ENCODE measurements at regions of chr5 and their contacts with region 1.

Region 1: GRCh38 chr5:134411546-134412266 is at the start of gene CDKN2AIPNL:
- DNase-seq: peak; percentile 94
- ATAC-seq: peak; percentile 99
- H3K4me3 Mint-ChIP-seq: peak within 1 kb of the TSS; percentile 97
- H3K27ac Mint-ChIP-seq: peak within 1 kb of the TSS; percentile 76
- H3K4me1 Mint-ChIP-seq: peaks cover 35% of the 10 kb centered on the region
- H3K27me3 Mint-ChIP-seq: no peaks in the 10 kb centered on the region
- CTCF ChIP-seq: peak; percentile 71
- total RNA-seq, gene CDKN2AIPNL: 38.2 to 41.1 TPM

Region 2: GRCh38 chr5:134370871-134371833 is 40.6 kb before region 1 on chr5 and contains the start of gene UBE2B:
- CTCF ChIA-PET with region 1: interaction called, 10 read pairs
- POLR2A ChIA-PET with region 1: interaction called, 7 read pairs
- intact Hi-C with region 1: no loop called
- DNase-seq: peak; percentile 100
- ATAC-seq: peak; percentile 77
- H3K4me3 Mint-ChIP-seq: peak within 1 kb of the TSS; percentile 95
- H3K27ac Mint-ChIP-seq: peak within 1 kb of the TSS; percentile 99
- H3K4me1 Mint-ChIP-seq: peaks cover 41% of the 10 kb centered on the region
- H3K27me3 Mint-ChIP-seq: no peaks in the 10 kb centered on the region
- CTCF ChIP-seq: no peak
- total RNA-seq, gene UBE2B: 97.6 to 98.9 TPM

Region 3: GRCh38 chr5:134380346-134380745 is 31.4 kb before region 1 on chr5:
- CTCF ChIA-PET with region 1: interaction called, 10 read pairs
- POLR2A ChIA-PET with region 1: interaction called, 3 read pairs
- intact Hi-C with region 1: no loop called
- DNase-seq: no peak
- ATAC-seq: no peak
- H3K4me3 Mint-ChIP-seq: no peak overlapping the region
- H3K27ac Mint-ChIP-seq: peak overlapping the region; percentile 70
- H3K4me1 Mint-ChIP-seq: peaks cover 47% of the 10 kb centered on the region
- H3K27me3 Mint-ChIP-seq: no peaks in the 10 kb centered on the region
- CTCF ChIP-seq: no peak

Region 4: GRCh38 chr5:134394932-134395331 is 16.8 kb before region 1 on chr5:
- CTCF ChIA-PET with region 1: interaction called, 16 read pairs
- POLR2A ChIA-PET with region 1: interaction called, 7 read pairs
- intact Hi-C with region 1: no loop called
- DNase-seq: no peak
- ATAC-seq: no peak
- H3K4me3 Mint-ChIP-seq: no peak overlapping the region
- H3K27ac Mint-ChIP-seq: no peak overlapping the region
- H3K4me1 Mint-ChIP-seq: peaks cover 11% of the 10 kb centered on the region
- H3K27me3 Mint-ChIP-seq: no peaks in the 10 kb centered on the region
- CTCF ChIP-seq: no peak

Region 5: DNA sequence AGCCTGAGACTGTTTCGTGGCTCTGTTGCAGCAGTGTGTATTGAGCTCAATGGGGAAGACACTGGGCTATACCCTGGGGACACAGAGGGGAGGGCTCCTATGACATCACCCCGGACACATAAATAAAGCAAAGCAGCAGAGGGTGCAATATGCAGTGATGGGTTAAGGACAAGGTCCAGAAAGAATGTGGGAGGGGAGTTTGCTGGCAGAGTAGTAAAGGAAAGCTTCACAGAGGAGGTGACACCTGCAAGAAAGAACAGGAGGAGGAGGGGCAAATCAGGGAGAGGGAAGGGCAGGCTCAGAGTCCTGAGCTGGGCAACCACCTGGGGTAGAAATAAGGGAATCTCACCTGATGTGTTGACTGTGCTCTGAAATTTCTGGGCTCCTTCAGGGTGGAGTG is 35.2 kb after region 1 on chr5:
- CTCF ChIA-PET with region 1: no interaction called
- POLR2A ChIA-PET with region 1: no interaction called
- intact Hi-C with region 1: no loop called
- DNase-seq: no peak
- ATAC-seq: no peak
- H3K4me3 Mint-ChIP-seq: no peak overlapping the region
- H3K27ac Mint-ChIP-seq: no peak overlapping the region
- H3K4me1 Mint-ChIP-seq: peaks cover 4% of the 10 kb centered on the region
- H3K27me3 Mint-ChIP-seq: no peaks in the 10 kb centered on the region
- CTCF ChIP-seq: no peak

Region 6: DNA sequence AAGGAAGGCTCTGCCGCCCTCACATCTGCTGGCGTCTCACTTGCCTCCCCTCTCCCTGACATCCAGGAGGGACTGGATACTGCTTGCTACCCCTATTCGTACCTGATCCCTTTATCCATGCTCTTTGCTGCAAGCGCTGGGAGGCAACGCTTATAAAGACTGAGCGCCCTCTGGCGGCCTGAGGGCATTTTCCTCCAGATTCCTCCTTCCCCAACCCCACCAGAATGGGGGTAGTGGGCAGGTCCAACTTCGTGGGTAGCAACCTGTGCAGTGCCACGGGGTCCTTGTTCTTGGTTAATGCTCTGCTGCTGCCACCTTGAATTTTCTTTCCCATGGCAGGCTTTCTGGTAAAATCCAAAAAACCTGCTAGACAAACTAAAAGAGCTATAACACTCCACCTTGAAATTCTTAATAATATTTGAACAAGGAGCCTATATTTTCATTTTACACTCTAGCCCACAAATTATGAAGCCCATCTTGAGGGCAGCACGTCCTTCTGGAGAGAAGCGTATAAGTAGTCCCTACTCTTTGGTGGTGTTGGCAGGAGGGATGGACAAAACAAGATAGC is 166.2 kb after region 1 on chr5:
- CTCF ChIA-PET with region 1: interaction called, 27 read pairs
- POLR2A ChIA-PET with region 1: interaction called, 3 read pairs
- intact Hi-C with region 1: no loop called
- DNase-seq: peak; percentile 89
- ATAC-seq: peak; percentile 81
- H3K4me3 Mint-ChIP-seq: no peak overlapping the region
- H3K27ac Mint-ChIP-seq: peak overlapping the region; percentile 25
- H3K4me1 Mint-ChIP-seq: peaks cover 2% of the 10 kb centered on the region
- H3K27me3 Mint-ChIP-seq: no peaks in the 10 kb centered on the region
- CTCF ChIP-seq: peak; percentile 95

Measured in activated CD8-positive, alpha-beta T cell treated with anti-CD3 and anti-CD28 coated beads for 36 hours (primary cell).